B cell (primary cell): ENCODE measurements at regions of chr19 and their contacts with region 1.

Region 1: DNA sequence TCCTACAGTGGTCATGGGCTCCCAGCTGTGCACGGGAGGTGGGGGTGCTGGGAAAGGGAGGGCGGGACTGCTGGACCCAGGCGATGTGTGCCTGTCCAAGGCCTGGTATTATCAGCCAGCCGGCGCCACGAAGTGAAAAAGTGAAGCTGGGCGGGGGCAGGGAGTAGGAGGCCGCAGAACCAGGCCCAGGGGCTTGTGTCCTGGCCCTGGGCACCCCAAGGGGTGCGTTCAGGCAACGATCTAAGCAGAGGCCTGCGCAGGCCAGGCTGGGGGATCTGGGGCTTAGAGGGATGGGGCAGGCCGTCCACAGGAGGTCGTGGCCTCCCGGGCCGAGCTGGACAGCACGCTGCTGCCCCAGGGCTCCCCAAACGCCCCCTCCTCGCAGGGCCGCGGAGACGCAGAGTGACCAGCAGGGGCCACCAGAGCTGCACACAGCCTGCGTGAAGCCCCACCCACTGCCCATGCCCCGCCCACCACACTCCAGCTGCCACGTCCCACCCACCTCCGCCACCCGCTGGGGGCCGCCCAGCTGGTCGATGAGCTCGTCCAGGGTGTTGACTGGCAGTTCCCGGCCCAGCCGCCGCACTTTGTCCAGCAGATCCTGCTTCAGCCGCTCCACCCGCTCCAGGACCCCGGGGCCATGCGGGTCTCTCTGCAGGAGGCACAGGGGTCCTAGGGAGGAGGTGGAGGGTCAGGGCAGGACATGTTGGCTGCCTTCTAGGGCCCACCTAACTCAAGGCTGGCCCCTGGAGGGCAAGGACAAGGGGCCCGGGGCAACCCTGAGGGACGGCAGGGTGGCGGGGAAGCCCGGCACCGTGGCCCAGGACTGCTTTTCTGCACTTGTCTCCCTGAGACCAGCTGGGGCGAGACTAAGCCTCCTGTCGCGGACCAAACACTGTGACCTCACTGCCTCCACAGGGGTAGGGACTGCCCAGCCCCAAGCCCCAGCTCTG is 9.5 kb downstream of the GPX4 start:
- DNase-seq: peak; percentile 90
- ATAC-seq: peak; percentile 98
- H3K4me3 ChIP-seq: no peak overlapping the region
- H3K4me3 Mint-ChIP-seq: no peak overlapping the region
- H3K27ac ChIP-seq: no peak overlapping the region
- H3K27ac Mint-ChIP-seq: peak overlapping the region; percentile 53
- H3K4me1 ChIP-seq: peaks cover 6 to 12% of the 10 kb centered on the region in 2 donors
- H3K4me1 Mint-ChIP-seq: peaks cover 5% of the 10 kb centered on the region
- H3K27me3 ChIP-seq: no peaks in the 10 kb centered on the region
- H3K27me3 Mint-ChIP-seq: no peaks in the 10 kb centered on the region
- CTCF ChIP-seq: peak; percentile 92

Region 2: DNA sequence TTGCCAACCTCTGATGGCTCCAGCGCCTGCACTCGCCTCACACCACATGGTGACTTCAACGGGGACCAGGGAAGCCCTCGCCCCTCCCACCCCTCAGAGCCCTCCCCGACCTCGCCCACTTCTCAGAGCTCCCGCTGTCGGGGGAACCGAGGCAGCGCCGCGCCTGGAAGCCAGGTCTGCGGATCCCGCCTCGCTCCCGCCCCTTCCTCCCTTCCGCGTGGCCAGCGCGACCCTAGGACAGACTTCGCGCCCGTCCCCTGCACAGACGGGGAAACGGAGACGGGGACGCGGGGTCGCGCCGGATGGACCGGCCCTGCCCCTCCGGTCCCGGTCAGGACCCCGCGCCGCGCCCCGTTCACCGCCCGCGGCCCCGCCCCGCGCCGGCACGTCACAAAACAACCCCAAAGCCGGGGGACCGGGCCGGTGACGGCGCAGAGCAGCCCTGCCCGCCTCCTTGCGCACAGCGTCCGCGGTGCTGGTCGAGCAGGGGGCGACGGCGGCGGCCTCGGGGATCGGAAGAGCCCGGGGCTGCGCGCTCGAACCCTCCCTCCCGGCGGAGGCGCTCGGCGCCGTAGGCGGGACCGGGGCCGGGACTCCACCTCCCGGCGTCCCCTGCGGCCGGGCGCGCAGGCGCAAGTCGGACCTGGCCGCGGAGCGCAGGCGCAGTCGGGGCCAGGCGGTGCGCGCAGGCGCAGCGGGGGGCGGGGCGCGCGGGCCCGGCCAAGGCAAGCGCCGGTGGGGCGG is 582.1 kb before region 1 on chr19:
- CTCF ChIA-PET with region 1: no interaction called
- POLR2A ChIA-PET with region 1: no interaction called
- intact Hi-C with region 1: no loop called
- DNase-seq: peak; percentile 94
- ATAC-seq: peak; percentile 80
- H3K4me3 ChIP-seq: peak overlapping the region in 4 of 5 experiments; percentile 73 to 83 (median 76)
- H3K4me3 Mint-ChIP-seq: peak overlapping the region; percentile 89
- H3K27ac ChIP-seq: peak overlapping the region; percentile 41 to 79
- H3K27ac Mint-ChIP-seq: peak overlapping the region; percentile 88
- H3K4me1 ChIP-seq: peaks cover 12 to 25% of the 10 kb centered on the region in 2 donors
- H3K4me1 Mint-ChIP-seq: peaks cover 13% of the 10 kb centered on the region
- H3K27me3 ChIP-seq: no peaks in the 10 kb centered on the region
- H3K27me3 Mint-ChIP-seq: peaks cover 6% of the 10 kb centered on the region
- CTCF ChIP-seq: no peak

Region 3: DNA sequence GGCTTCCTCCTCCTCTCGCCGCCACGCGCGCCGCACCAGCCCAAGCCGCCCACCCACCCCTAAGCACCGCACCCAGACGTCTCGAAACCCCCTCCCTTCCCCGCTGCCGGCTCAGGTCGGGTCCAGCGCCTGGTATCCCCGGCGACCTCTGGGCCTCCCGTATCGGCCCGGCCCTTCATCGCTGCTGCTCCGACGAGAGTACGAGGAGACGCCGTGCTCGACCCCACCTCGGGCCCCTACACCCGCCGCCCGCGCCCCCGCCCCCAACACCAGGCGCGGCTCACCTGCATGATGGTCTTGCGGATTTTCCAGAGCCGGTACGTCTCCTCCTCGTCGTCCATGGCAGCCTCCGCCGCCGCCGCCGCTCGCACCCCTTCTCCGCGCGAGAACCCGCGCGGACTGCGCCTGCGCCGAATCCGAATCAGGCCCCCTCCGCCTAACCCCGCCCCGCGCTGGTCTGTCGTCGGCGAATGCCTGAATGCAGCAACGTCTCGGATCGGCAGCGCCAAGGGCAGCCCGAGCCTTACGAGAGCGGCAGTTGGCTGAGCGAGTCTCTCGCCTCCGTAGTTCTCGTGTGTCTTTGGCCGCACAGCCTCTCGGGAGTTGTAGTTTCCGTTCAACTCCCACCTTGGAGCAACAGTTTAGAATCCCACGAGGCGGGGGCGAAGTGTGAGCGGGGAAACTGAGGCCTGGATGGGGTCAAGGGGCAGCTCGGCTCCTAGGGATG is 18.2 kb before region 1 on chr19 and contains the start of gene POLR2E:
- CTCF ChIA-PET with region 1: no interaction called
- POLR2A ChIA-PET with region 1: interaction called, 10 read pairs
- intact Hi-C with region 1: no loop called
- DNase-seq: peak; percentile 99
- ATAC-seq: peak; percentile 99
- H3K4me3 ChIP-seq: peak within 1 kb of the TSS; percentile 56 to 86 (median 74)
- H3K4me3 Mint-ChIP-seq: peak within 1 kb of the TSS; percentile 97
- H3K27ac ChIP-seq: peak within 1 kb of the TSS; percentile 27 to 70
- H3K27ac Mint-ChIP-seq: peak within 1 kb of the TSS; percentile 95
- H3K4me1 ChIP-seq: peaks cover 19 to 23% of the 10 kb centered on the region in 2 donors
- H3K4me1 Mint-ChIP-seq: peaks cover 35% of the 10 kb centered on the region
- H3K27me3 ChIP-seq: no peaks in the 10 kb centered on the region
- H3K27me3 Mint-ChIP-seq: no peaks in the 10 kb centered on the region
- CTCF ChIP-seq: no peak
- total RNA-seq, gene POLR2E: 103 and 106 TPM in 2 replicates

Region 4: DNA sequence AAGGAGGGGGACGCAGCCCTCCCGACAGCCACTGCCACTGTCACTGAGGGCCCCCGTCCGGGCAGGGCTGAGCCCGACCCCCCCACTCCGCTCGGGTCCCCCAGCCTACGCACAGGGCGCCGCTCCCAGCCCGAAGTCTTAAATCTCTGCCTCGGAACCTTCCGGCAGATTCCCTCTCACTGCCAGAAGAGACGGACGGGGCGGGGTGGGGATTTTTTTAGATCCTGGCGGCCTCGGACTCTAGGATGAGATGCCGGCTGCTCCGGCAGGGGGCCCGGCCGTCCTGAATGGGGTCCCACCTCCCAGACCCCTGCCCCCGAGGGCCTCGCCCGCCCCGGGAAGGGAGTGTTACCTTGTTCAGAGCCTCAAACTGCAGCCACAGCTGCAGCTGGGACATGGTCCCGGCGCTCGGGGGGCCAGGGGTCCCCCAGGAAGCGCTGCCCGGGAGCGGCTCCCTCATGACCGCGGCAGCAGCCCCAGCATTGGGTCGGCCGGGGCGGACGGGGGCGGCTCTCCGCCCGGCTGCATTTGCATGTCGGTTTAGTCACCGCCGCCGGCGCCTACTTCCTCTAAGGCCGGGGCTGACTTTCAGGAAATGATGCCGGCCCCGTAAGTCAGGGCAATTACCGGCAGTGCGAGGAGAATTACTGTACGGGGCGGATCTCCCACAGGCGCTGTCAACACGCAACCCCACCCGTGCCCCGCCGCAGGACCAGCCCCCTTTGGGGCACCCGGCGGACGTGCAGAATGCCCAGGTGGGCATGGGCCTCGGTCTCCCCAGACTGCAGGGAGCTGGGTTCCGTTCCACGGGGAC is 18.6 kb after region 1 on chr19:
- CTCF ChIA-PET with region 1: interaction called, 15 read pairs
- POLR2A ChIA-PET with region 1: no interaction called
- intact Hi-C with region 1: loop called (anchors 2 kb)
- DNase-seq: peak; percentile 91
- ATAC-seq: peak; percentile 73
- H3K4me3 ChIP-seq: peak overlapping the region; percentile 41 to 92 (median 78)
- H3K4me3 Mint-ChIP-seq: peak overlapping the region; percentile 90
- H3K27ac ChIP-seq: peak overlapping the region; percentile 78 to 89
- H3K27ac Mint-ChIP-seq: peak overlapping the region; percentile 93
- H3K4me1 ChIP-seq: peaks cover 42 to 58% of the 10 kb centered on the region in 2 donors
- H3K4me1 Mint-ChIP-seq: peaks cover 38% of the 10 kb centered on the region
- H3K27me3 ChIP-seq: no peaks in the 10 kb centered on the region
- H3K27me3 Mint-ChIP-seq: no peaks in the 10 kb centered on the region
- CTCF ChIP-seq: no peak

Region 5: DNA sequence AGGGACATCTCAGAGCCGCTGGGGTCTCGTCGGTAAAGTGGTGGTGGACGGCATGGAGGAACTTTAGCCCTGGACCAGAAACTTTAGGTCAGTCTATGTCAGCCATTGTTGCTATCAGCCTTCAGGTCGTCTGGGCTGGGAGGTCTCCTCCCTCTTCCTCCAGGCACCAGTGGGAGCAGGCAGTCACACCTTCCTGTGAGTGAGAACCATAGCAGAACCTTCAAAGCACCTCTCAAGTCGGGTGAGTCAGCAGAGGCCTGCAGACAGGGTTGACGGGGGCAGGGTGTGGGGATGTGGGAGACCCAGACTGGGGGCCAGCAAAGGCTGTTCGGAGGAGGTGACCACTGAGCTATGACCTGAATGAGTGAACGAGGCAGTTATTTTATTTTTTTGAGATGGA is 76.1 kb after region 1 on chr19:
- CTCF ChIA-PET with region 1: interaction called, 62 read pairs
- POLR2A ChIA-PET with region 1: no interaction called
- intact Hi-C with region 1: loop called (anchors 5 kb)
- DNase-seq: no peak
- ATAC-seq: no peak
- H3K4me3 ChIP-seq: no peak overlapping the region
- H3K4me3 Mint-ChIP-seq: no peak overlapping the region
- H3K27ac ChIP-seq: no peak overlapping the region
- H3K27ac Mint-ChIP-seq: no peak overlapping the region
- H3K4me1 ChIP-seq: no peaks in the 10 kb centered on the region
- H3K4me1 Mint-ChIP-seq: no peaks in the 10 kb centered on the region
- H3K27me3 ChIP-seq: no peaks in the 10 kb centered on the region
- H3K27me3 Mint-ChIP-seq: no peaks in the 10 kb centered on the region
- CTCF ChIP-seq: no peak

Region 6: DNA sequence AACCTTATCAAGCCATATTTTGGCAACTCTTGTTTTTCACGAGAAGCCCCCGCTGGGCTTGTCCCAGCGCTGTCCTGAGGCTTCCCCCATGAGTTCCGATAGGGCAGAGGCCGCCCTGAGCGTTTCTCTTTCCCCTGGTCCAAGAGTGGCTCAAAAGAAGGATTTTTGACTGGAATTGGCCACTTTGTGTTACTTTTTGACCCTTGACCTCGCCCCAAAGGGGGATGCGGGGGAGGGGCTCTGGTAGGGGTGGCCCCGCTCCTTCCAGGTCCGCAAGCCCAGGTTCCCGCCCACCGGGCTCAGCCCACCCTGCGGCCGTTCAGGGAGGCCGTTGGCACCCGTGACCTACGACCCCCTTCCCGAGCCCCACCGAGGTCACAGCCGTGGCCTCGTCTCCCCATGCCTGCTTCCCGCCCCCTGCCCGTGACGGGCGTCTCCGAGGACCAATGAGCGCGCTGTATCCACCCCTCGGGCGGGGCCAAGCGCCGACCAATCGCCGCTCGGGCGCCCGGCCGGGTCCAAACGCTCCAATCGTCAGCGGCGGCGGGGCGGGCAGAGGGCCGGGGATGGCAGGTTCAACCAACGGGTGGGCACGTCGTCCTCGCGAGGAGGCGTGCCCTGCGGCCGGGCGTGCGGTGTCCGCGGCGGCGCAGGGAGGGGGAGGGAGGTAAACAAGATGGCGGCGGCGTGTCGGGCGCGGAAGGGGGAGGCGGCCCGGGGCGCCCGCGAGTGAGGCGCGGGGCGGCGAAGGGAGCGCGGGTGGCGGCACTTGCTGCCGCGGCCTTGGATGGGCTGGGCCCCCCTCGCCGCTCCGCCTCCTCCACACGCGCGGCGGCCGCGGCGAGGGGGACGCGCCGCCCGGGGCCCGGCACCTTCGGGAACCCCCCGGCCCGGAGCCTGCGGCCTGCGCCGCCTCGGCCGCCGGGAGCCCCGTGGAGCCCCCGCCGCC is 92.1 kb after region 1 on chr19 and contains the start of gene STK11:
- CTCF ChIA-PET with region 1: interaction called, 16 read pairs
- POLR2A ChIA-PET with region 1: no interaction called
- intact Hi-C with region 1: no loop called
- DNase-seq: peak; percentile 99
- ATAC-seq: peak; percentile 92
- H3K4me3 ChIP-seq: peak within 1 kb of the TSS; percentile 51 to 77 (median 63)
- H3K4me3 Mint-ChIP-seq: peak within 1 kb of the TSS; percentile 94
- H3K27ac ChIP-seq: peak within 1 kb of the TSS; percentile 43 to 65
- H3K27ac Mint-ChIP-seq: peak within 1 kb of the TSS; percentile 92
- H3K4me1 ChIP-seq: peaks cover 16 to 32% of the 10 kb centered on the region in 2 donors
- H3K4me1 Mint-ChIP-seq: peaks cover 25% of the 10 kb centered on the region
- H3K27me3 ChIP-seq: no peaks in the 10 kb centered on the region
- H3K27me3 Mint-ChIP-seq: no peaks in the 10 kb centered on the region
- CTCF ChIP-seq: no peak
- total RNA-seq, gene STK11: 89.9 and 91.8 TPM in 2 replicates